ENCODE measurements at regions of chr6 and their contacts with region 1.

Region 1: DNA sequence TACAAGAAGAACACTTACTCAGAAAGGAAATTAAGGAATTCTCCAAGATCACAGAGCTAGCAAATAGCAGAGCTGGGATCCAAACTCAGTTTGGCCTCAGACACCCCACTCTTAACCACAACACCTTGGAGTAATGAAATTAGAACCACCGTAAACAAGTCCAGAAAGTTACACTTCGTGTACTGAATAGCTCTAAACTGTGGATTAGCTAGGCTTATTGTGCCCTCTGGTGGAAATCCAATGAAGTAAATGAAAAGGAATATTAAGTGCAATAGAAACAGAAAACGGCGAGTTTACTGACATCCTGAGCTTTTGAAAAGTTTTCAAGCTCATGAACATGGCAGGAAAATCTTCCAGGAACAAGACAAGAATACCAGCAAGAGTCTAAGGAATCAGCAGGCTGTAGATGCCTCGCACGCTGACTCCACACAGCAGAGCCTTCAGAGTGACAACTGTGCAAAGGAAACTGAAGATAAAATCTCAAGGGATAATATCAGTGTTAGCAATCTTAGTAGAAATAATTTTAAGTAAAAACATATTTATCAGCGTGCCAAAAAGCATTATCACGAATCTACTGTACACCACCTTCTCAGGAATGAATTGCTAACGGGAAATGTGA is 34.6 kb downstream of the FBXO5 start:
- DNase-seq: no peak
- ATAC-seq: peak; percentile 58
- H3K4me3 Mint-ChIP-seq: peak overlapping the region; percentile 24
- H3K27ac Mint-ChIP-seq: no peak overlapping the region
- H3K4me1 Mint-ChIP-seq: peaks cover 12% of the 10 kb centered on the region
- H3K27me3 Mint-ChIP-seq: peaks cover 18% of the 10 kb centered on the region
- CTCF ChIP-seq: peak; percentile 77

Region 2: GRCh38 chr6:152863618-152864326 is 84.5 kb before region 1 on chr6:
- CTCF ChIA-PET with region 1: interaction called, 33 read pairs
- POLR2A ChIA-PET with region 1: no interaction called
- intact Hi-C with region 1: loop called (anchors 1 kb)
- DNase-seq: peak; percentile 81
- ATAC-seq: peak; percentile 74
- H3K4me3 Mint-ChIP-seq: no peak overlapping the region
- H3K27ac Mint-ChIP-seq: no peak overlapping the region
- H3K4me1 Mint-ChIP-seq: peaks cover 5% of the 10 kb centered on the region
- H3K27me3 Mint-ChIP-seq: peaks cover 10% of the 10 kb centered on the region
- CTCF ChIP-seq: peak; percentile 75

Region 3: DNA sequence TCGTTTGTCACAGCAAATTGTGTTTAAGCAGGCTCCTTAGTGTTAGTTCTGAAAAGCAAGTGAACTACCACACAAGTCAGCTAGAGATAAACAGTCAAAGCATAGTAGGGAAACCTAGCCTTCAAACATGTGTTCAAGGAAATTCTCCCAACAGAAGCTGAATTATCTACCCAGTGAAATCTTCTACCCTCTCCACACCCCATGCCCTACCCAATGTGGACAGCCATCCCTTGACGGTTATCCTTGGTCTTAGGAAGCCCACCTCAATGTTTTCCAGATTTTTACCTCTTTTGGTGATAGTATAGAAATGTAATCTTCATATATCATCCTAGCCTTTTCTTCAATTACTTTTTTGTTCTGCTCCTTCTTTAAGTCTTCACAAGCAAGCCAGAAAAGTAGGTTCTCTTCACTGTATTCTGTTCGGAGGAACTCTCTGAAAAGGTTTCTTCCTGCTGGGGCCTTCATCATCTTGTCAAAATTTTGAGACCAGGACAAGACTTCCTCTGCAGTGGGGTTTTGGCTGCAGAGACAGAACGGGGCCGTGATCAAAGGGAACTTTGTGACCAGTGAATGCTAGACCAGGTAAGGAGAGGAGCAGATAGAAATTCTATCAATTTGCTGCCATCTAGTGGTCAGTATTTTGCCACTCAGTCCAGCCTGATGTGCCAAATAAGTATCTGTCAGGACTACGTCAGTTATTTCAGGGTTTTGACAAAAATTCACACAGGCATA is 75.9 kb after region 1 on chr6:
- CTCF ChIA-PET with region 1: interaction called, 8 read pairs
- POLR2A ChIA-PET with region 1: no interaction called
- intact Hi-C with region 1: loop called (anchors 5 kb)
- DNase-seq: peak; percentile 59
- ATAC-seq: peak; percentile 93
- H3K4me3 Mint-ChIP-seq: no peak overlapping the region
- H3K27ac Mint-ChIP-seq: no peak overlapping the region
- H3K4me1 Mint-ChIP-seq: peaks cover 6% of the 10 kb centered on the region
- H3K27me3 Mint-ChIP-seq: peaks cover 13% of the 10 kb centered on the region
- CTCF ChIP-seq: peak; percentile 75

Region 4: DNA sequence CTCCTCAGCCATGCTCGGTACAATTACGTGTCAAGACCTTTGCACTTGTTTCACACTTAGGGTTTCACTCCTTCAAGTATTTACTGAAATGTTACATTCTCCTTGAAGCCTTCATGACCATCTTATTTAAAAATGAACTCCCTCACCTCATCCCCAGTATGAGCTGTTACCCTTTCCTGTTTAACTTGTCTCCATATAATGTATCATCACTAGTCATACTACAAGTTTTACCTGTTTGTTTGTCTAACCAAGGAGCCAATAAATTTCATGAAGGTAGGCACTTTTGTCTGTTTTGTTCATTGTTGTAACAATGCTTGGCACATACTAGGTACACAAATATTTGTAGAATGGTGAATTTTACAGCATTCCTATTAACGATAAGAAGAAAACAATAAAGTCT is 100.4 kb after region 1 on chr6:
- CTCF ChIA-PET with region 1: no interaction called
- POLR2A ChIA-PET with region 1: no interaction called
- intact Hi-C with region 1: no loop called
- DNase-seq: no peak
- ATAC-seq: no peak
- H3K4me3 Mint-ChIP-seq: no peak overlapping the region
- H3K27ac Mint-ChIP-seq: no peak overlapping the region
- H3K4me1 Mint-ChIP-seq: no peaks in the 10 kb centered on the region
- H3K27me3 Mint-ChIP-seq: no peaks in the 10 kb centered on the region
- CTCF ChIP-seq: no peak

Measured in activated CD8-positive, alpha-beta T cell treated with anti-CD3 and anti-CD28 coated beads for 36 hours (primary cell).